Mammary epithelial cell (primary cell): ENCODE measurements at regions of chr11 and their contacts with region 1.

Region 1: GRCh38 chr11:78188286-78189173 is at the starts of genes KCTD21 and USP35:
- DNase-seq: peak; percentile 96
- H3K4me3 ChIP-seq: peak within 1 kb of the TSS; percentile 53 to 99 (median 71)
- H3K27ac ChIP-seq: peak within 1 kb of the TSS; percentile 52
- H3K4me1 ChIP-seq: peaks cover 41% of the 10 kb centered on the region
- H3K27me3 ChIP-seq: no peaks in the 10 kb centered on the region
- CTCF ChIP-seq: no peak
- total RNA-seq, gene KCTD21: 8.7 to 9.7 TPM
- total RNA-seq, gene USP35: 10.7 to 13.3 TPM

Region 2: GRCh38 chr11:78079232-78080083 is 109.1 kb before region 1 on chr11 and contains the start of gene NDUFC2:
- CTCF ChIA-PET with region 1: no interaction called
- dilution Hi-C with region 1: no loop called
- in situ Hi-C with region 1: no loop called
- intact Hi-C with region 1: loop called (anchors 1 kb)
- DNase-seq: peak; percentile 75
- H3K4me3 ChIP-seq: peak within 1 kb of the TSS; percentile 56 to 95 (median 88)
- H3K27ac ChIP-seq: peak within 1 kb of the TSS; percentile 86
- H3K4me1 ChIP-seq: peaks cover 19% of the 10 kb centered on the region
- H3K27me3 ChIP-seq: no peaks in the 10 kb centered on the region
- CTCF ChIP-seq: no peak
- total RNA-seq, gene NDUFC2: 108 to 209 TPM

Region 3: GRCh38 chr11:78262691-78263090 is 74.2 kb after region 1 on chr11:
- CTCF ChIA-PET with region 1: no interaction called
- dilution Hi-C with region 1: loop called (anchors 5 kb)
- in situ Hi-C with region 1: no loop called
- intact Hi-C with region 1: no loop called
- DNase-seq: no peak
- H3K4me3 ChIP-seq: no peak overlapping the region
- H3K27ac ChIP-seq: no peak overlapping the region
- H3K4me1 ChIP-seq: no peaks in the 10 kb centered on the region
- H3K27me3 ChIP-seq: no peaks in the 10 kb centered on the region
- CTCF ChIP-seq: no peak